Left lung (tissue), 14 donors: ENCODE measurements at regions of chr6 and their contacts with region 1.

Region 1: DNA sequence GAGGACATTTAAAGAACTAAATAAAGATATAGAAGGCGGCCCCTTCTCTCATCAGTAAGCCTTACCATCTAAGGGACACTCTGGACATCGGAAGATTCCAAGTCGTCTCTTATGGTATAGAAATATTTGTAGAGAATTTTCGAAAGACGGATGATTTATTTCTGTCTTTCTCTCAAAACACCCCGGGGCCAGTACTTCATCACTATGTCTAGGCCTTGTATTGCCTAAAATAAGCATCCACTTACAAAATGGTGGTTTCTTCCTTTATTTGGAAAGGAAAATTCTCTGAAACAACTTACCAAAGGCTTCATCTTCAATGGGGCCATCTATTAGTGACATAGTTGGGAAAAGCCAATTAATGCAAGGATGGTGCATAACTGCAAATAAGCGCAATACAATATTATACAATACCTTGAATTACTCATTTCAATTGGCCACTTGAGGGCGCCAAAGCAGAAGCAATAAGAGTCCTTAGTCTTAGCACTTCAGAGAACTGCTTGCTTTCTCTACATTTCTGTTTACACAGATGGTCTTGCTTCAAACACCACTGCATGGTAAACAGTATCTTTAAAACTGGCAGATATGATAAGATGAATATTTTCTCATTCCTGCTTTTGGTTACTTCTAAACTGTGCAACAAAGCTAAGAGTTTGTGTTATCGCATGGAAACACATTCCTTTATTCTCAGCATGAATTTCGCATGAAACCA is 113.2 kb downstream of the VIP start:
- DNase-seq: peak in 3 of 4 donors; percentile 34 to 68 (median 49)
- ATAC-seq: peak; percentile 88
- H3K4me3 ChIP-seq: no peak overlapping the region
- H3K27ac ChIP-seq: no peak overlapping the region
- H3K4me1 ChIP-seq: no peaks in the 10 kb centered on the region
- H3K27me3 ChIP-seq: no peaks in the 10 kb centered on the region
- CTCF ChIP-seq: peak; percentile 44 to 60

Region 2: DNA sequence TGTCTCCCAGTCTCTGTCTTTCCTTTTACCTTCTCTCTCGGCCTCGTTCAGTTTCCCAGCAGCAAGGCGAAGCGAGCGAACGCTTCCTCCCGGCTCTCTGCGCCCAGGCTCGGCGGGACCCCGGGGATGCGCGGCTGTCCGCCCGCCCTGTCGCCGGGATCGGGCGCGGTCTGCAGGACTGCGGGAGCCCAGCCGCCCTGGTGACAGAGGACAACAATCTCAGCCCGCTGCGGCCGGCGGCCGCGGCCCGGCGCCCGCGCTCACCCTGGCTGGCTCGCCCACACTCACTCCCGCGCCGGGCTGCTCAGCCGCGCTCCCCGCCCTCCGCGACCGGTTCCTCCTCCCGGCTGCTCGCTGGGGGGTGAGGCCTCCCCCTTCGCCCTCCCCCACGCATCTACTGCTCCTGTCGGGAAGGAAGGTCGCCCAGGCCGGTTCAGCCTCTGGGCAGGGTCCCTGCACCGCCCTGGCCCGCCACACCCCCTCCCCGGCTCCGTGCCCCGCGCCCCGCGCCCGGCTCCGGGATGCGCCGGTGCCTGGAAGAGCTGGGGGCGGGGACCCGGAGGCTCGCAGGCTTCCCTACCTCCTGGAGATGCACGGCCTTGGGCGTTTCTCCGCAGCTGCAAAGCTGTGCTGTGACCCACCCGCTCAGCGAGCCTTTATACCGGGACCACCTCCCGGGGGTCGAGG is 227.0 kb before region 1 on chr6:
- intact Hi-C with region 1: no loop called
- DNase-seq: peak in 3 of 4 donors; percentile 17 to 95 (median 58)
- ATAC-seq: peak; percentile 86
- H3K4me3 ChIP-seq: peak overlapping the region; percentile 61 to 63
- H3K27ac ChIP-seq: peak overlapping the region; percentile 48 to 84
- H3K4me1 ChIP-seq: peaks cover 0 to 52% of the 10 kb centered on the region in 2 donors
- H3K27me3 ChIP-seq: peaks cover 0 to 18% of the 10 kb centered on the region in 2 donors
- CTCF ChIP-seq: no peak

Region 3: DNA sequence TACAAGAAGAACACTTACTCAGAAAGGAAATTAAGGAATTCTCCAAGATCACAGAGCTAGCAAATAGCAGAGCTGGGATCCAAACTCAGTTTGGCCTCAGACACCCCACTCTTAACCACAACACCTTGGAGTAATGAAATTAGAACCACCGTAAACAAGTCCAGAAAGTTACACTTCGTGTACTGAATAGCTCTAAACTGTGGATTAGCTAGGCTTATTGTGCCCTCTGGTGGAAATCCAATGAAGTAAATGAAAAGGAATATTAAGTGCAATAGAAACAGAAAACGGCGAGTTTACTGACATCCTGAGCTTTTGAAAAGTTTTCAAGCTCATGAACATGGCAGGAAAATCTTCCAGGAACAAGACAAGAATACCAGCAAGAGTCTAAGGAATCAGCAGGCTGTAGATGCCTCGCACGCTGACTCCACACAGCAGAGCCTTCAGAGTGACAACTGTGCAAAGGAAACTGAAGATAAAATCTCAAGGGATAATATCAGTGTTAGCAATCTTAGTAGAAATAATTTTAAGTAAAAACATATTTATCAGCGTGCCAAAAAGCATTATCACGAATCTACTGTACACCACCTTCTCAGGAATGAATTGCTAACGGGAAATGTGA is 84.5 kb after region 1 on chr6:
- intact Hi-C with region 1: loop called in 1 of 2 experiments (anchors 5 kb)
- DNase-seq: peak in 2 of 4 donors; percentile 31 to 44
- ATAC-seq: peak; percentile 83
- H3K4me3 ChIP-seq: no peak overlapping the region
- H3K27ac ChIP-seq: no peak overlapping the region
- H3K4me1 ChIP-seq: no peaks in the 10 kb centered on the region
- H3K27me3 ChIP-seq: peaks cover 0 to 25% of the 10 kb centered on the region in 2 donors
- CTCF ChIP-seq: peak; percentile 40 to 51

Region 4: DNA sequence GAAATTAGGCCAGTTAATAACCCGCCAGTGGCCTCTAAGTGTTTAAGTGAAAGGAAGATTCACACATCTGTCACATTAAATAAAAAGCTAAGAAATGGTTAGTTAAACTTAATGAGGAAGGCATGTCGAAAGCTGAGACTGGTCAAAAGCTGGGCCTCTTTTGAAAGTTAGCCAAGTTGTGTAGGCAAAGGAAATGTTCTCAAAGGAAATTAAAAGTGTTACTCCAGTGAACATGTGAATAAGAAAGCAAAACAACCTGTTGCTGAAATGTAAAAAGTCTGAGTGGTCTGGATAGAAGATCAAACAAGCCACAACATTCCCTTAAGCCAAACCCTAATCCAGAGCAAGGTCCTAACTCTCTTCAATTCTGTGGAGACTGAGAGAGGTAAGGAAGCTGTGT is 149.7 kb after region 1 on chr6:
- intact Hi-C with region 1: loop called in 1 of 2 experiments (anchors 10 kb)
- DNase-seq: no peak
- ATAC-seq: no peak
- H3K4me3 ChIP-seq: no peak overlapping the region
- H3K27ac ChIP-seq: no peak overlapping the region
- H3K4me1 ChIP-seq: no peaks in the 10 kb centered on the region
- H3K27me3 ChIP-seq: no peaks in the 10 kb centered on the region
- CTCF ChIP-seq: no peak